ENCODE measurements at regions of chr4 and their contacts with region 1.

Region 1: DNA sequence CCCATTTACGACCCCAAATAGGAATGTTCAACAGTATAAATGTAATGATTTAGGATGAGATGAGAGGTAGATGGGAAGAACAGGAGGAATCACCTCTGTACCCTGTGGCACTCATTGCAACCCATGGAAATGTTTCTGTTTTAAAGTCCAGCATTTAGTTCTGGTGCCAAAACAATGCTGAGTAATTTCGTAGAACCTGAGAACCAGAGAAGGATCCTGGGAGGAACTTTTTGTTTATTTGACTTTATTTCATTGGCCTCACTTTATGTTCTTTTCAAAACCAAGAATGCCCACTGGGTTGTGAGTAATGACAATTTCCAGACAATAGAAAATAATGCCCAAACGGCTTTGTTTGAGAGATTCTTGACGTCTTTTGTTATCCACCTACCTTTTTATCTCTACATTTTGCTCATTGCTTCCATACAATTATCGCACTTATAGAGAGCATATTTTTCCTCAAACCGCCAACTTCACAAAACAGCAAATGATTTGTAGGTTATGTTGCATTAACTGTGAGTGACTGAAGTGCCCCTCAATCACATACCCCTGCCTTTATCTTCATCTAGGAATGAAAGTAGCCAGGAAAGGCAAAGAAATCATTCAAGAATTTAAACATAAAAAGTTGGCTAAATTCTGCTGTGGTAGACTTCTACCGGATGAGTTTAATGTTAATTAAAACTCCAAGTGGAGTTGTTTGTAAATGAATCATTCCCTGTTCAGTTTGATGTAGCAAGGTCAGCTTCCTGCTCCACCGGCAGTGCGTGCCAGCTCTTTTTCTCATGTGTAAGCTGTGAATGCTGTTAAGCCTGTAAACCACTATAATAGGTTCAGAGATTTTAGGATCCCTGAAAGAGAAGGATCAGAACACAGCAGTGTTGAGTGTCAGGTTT is 111.5 kb downstream of the SHROOM3 start:
- DNase-seq: no peak
- ATAC-seq: peak; percentile 80
- H3K4me3 ChIP-seq: no peak overlapping the region
- H3K27ac ChIP-seq: peak overlapping the region; percentile 69
- H3K4me1 ChIP-seq: peaks cover 5% of the 10 kb centered on the region
- H3K27me3 ChIP-seq: no peaks in the 10 kb centered on the region
- CTCF ChIP-seq: no peak

Region 2: GRCh38 chr4:75598390-75598789 is 948.1 kb before region 1 on chr4:
- CTCF ChIA-PET with region 1: no interaction called
- POLR2A ChIA-PET with region 1: no interaction called
- in situ Hi-C with region 1: no loop called
- intact Hi-C with region 1: no loop called
- DNase-seq: no peak
- ATAC-seq: no peak
- H3K4me3 ChIP-seq: no peak overlapping the region
- H3K27ac ChIP-seq: no peak overlapping the region
- H3K4me1 ChIP-seq: no peaks in the 10 kb centered on the region
- H3K27me3 ChIP-seq: no peaks in the 10 kb centered on the region
- CTCF ChIP-seq: no peak

Region 3: GRCh38 chr4:76459291-76459723 is 87.2 kb before region 1 on chr4:
- CTCF ChIA-PET with region 1: no interaction called
- POLR2A ChIA-PET with region 1: no interaction called
- in situ Hi-C with region 1: no loop called
- intact Hi-C with region 1: no loop called
- DNase-seq: no peak
- ATAC-seq: no peak
- H3K4me3 ChIP-seq: no peak overlapping the region
- H3K27ac ChIP-seq: no peak overlapping the region
- H3K4me1 ChIP-seq: no peaks in the 10 kb centered on the region
- H3K27me3 ChIP-seq: no peaks in the 10 kb centered on the region
- CTCF ChIP-seq: no peak

Region 4: GRCh38 chr4:76923619-76924357 is 377.3 kb after region 1 on chr4:
- CTCF ChIA-PET with region 1: no interaction called
- POLR2A ChIA-PET with region 1: no interaction called
- in situ Hi-C with region 1: no loop called
- intact Hi-C with region 1: no loop called
- DNase-seq: no peak
- ATAC-seq: no peak
- H3K4me3 ChIP-seq: no peak overlapping the region
- H3K27ac ChIP-seq: no peak overlapping the region
- H3K4me1 ChIP-seq: no peaks in the 10 kb centered on the region
- H3K27me3 ChIP-seq: no peaks in the 10 kb centered on the region
- CTCF ChIP-seq: no peak

Region 5: GRCh38 chr4:77911842-77912450 is 1365.4 kb after region 1 on chr4:
- CTCF ChIA-PET with region 1: no interaction called
- POLR2A ChIA-PET with region 1: interaction called, 10 read pairs
- in situ Hi-C with region 1: no loop called
- intact Hi-C with region 1: no loop called
- DNase-seq: no peak
- ATAC-seq: no peak
- H3K4me3 ChIP-seq: no peak overlapping the region
- H3K27ac ChIP-seq: no peak overlapping the region
- H3K4me1 ChIP-seq: no peaks in the 10 kb centered on the region
- H3K27me3 ChIP-seq: no peaks in the 10 kb centered on the region
- CTCF ChIP-seq: no peak